PC-3 (cell line): ENCODE measurements at regions of chr2 and their contacts with region 1.

Region 1: GRCh38 chr2:165778653-165779451 is 15.2 kb downstream of the GALNT3 start:
- DNase-seq: peak; percentile 65
- ATAC-seq: peak; percentile 6
- H3K4me3 ChIP-seq: peak overlapping the region; percentile 2; the same call in 1 of the 2 replicates
- H3K27ac ChIP-seq: peak overlapping the region; percentile 78
- H3K4me1 ChIP-seq: peaks cover 37% of the 10 kb centered on the region
- H3K27me3 ChIP-seq: no peaks in the 10 kb centered on the region
- CTCF ChIP-seq: peak; percentile 63

Region 2: DNA sequence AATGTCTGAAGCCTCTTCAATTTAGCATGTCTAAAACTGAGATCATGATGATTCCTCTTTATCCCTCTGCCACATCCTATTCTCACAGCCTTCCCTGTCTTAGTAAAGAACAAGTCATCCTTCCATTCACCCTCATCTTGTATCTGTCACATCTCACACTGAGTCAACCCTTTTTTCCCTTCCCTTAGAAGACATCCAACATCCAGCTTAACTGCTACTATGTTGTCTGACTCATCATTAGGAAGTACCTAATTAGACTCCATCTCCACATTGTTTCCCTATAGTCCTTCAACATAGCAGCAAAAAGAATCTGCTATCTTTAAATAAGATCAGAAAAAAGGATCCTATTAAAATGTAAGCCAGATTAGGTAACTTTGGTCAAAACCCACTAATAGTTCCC is 1072.3 kb before region 1 on chr2:
- CTCF ChIA-PET with region 1: no interaction called
- POLR2A ChIA-PET with region 1: no interaction called
- intact Hi-C with region 1: no loop called
- DNase-seq: peak; percentile 71
- ATAC-seq: peak; percentile 80
- H3K4me3 ChIP-seq: no peak overlapping the region
- H3K27ac ChIP-seq: no peak overlapping the region
- H3K4me1 ChIP-seq: peaks cover 21% of the 10 kb centered on the region
- H3K27me3 ChIP-seq: no peaks in the 10 kb centered on the region
- CTCF ChIP-seq: no peak

Region 3: GRCh38 chr2:165015052-165015642 is 763.7 kb before region 1 on chr2:
- CTCF ChIA-PET with region 1: no interaction called
- POLR2A ChIA-PET with region 1: no interaction called
- intact Hi-C with region 1: loop called (anchors 5 kb)
- DNase-seq: peak; percentile 81
- ATAC-seq: peak; percentile 90
- H3K4me3 ChIP-seq: no peak overlapping the region
- H3K27ac ChIP-seq: no peak overlapping the region
- H3K4me1 ChIP-seq: no peaks in the 10 kb centered on the region
- H3K27me3 ChIP-seq: no peaks in the 10 kb centered on the region
- CTCF ChIP-seq: peak; percentile 94

Region 4: DNA sequence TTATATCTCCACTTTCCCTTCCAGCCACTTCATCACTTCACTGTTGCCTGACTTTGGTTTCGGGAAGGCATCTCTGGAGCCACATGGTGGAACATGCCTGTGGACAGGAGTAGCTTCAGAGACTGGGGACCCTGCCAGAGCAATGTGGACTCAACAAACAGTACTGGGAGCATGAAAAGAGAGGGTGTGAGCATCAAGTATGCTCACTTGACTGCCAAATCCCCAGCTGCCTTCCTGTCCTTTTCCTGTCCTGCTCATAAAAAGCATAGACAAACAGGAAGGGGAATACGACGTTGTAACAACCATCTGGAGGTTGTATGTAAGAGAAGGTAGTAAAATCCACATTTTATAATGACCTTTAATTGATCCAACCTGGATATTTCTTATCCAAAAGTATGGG is 370.7 kb before region 1 on chr2:
- CTCF ChIA-PET with region 1: interaction called, 3 read pairs
- POLR2A ChIA-PET with region 1: no interaction called
- intact Hi-C with region 1: loop called (anchors 1 kb)
- DNase-seq: peak; percentile 83
- ATAC-seq: peak; percentile 73
- H3K4me3 ChIP-seq: 0 out of 2 replicates have a peak overlapping the region, but pooled peaks have one; percentile 4
- H3K27ac ChIP-seq: peak overlapping the region; percentile 76
- H3K4me1 ChIP-seq: peaks cover 41% of the 10 kb centered on the region
- H3K27me3 ChIP-seq: no peaks in the 10 kb centered on the region
- CTCF ChIP-seq: no peak

Region 5: GRCh38 chr2:165698444-165698894 is 80.4 kb before region 1 on chr2:
- CTCF ChIA-PET with region 1: no interaction called
- POLR2A ChIA-PET with region 1: no interaction called
- intact Hi-C with region 1: loop called (anchors 2 kb)
- DNase-seq: peak; percentile 80
- ATAC-seq: peak; percentile 96
- H3K4me3 ChIP-seq: no peak overlapping the region
- H3K27ac ChIP-seq: no peak overlapping the region
- H3K4me1 ChIP-seq: no peaks in the 10 kb centered on the region
- H3K27me3 ChIP-seq: 0 out of 2 replicates have a peak, but pooled peaks cover 3% of the 10 kb centered on the region
- CTCF ChIP-seq: peak; percentile 79

Region 6: DNA sequence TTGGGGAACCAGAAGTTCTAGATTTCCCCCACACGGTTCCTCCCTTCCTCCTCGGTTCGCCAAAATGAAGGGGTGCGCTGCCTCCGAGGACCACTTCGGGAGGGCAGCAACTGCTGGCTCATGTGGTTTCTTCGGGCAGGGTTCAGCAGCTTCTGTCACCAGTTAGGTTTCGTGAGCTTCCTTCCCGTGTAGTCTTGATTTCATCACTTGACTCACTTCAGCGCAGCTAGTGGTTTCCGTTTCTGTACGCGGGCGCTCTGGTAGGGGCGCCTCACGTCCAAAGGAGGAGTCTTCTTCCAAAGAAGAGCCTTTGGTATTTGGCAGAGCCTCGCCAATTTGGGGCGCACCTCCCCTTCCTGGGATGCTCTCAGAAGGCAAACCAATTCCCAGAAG is 15.7 kb after region 1 on chr2:
- CTCF ChIA-PET with region 1: interaction called, 5 read pairs
- POLR2A ChIA-PET with region 1: interaction called, 11 read pairs
- intact Hi-C with region 1: loop called (anchors 1 kb)
- DNase-seq: peak; percentile 82
- ATAC-seq: peak; percentile 54
- H3K4me3 ChIP-seq: peak overlapping the region; percentile 81
- H3K27ac ChIP-seq: peak overlapping the region; percentile 80
- H3K4me1 ChIP-seq: peaks cover 42% of the 10 kb centered on the region
- H3K27me3 ChIP-seq: no peaks in the 10 kb centered on the region
- CTCF ChIP-seq: peak; percentile 24; the same call in 1 of the 2 replicates

Region 7: GRCh38 chr2:166157578-166157977 is 378.7 kb after region 1 on chr2:
- CTCF ChIA-PET with region 1: no interaction called
- POLR2A ChIA-PET with region 1: no interaction called
- intact Hi-C with region 1: loop called (anchors 1 kb)
- DNase-seq: peak; percentile 96
- ATAC-seq: peak; percentile 89
- H3K4me3 ChIP-seq: no peak overlapping the region
- H3K27ac ChIP-seq: peak overlapping the region; percentile 24
- H3K4me1 ChIP-seq: peaks cover 23% of the 10 kb centered on the region
- H3K27me3 ChIP-seq: peaks cover 17% of the 10 kb centered on the region; the same call in 1 of the 2 replicates
- CTCF ChIP-seq: 0 out of 2 replicates have a peak, but pooled peaks have one; percentile 15